ENCODE measurements at regions of chr2 and their contacts with region 1.

Region 1: DNA sequence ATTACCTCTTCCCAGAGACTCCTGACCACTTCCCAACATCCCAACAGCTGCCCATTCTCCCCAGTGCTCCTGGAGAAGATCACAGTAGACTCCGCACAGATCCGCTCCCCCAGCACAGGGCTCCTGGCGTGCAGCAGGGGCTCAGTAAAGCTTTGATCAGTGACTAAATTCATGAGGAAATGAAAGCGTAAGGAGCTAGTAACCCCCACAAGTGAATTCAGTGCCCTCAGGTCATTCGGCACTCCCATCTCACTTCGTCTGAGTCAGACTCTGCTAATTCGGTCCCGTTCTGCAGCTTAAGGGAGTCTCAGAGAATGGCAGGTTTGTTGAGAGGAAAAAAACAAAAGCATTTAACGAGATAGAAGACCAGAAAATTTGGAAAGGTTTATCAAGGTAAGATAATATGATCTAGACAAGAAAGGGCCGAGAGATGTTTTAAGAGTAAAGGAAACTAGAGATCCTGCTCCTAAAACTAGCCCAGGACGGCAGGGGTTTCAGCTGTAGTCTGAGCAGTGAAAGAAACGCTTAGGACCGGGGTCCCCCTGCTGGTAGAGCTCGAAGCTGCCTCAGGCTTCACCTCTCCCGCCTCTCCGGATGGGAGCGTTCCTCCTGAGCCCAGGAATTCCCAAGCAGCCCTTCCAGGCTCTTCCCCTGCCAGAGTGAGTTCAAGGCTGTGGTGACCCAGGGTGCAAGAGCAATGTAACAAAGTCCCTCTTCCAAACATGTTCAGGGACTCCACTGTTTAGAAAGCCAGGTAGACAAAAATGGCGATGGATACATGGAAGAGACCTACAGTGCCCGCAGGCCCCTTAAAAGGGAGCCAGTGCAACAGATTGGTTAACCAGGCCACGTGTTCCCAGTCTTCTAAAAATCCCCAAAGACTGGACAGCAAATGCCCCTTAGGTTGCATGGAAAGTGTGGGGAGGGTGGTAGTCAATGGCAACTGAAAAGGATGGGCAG is 127.3 kb downstream of the DNER start:
- DNase-seq: peak; percentile 82

Region 2: DNA sequence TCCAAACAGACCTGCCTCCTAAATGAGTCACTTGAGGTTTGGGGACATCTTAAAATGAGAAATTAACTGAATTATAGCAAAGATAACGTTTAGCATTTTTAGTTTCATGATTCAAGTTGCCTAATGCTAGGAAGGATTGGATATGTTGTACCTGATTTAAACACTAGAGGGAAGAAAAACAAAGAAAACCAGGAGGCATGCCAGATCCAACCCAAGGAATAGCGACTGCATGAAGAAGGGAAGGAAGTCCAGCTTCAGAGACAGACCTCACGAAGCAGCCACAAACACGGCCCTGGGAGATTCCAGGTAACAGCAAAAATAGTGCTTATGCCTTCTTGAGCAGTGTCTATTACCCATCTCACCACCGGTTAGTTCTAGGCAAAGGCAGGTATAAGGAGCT is 905.6 kb before region 1 on chr2:
- intact Hi-C with region 1: loop called (anchors 10 kb)
- DNase-seq: no peak

Region 3: GRCh38 chr2:229133155-229133772 is 453.8 kb before region 1 on chr2:
- intact Hi-C with region 1: loop called (anchors 5 kb)
- DNase-seq: no peak

Region 4: DNA sequence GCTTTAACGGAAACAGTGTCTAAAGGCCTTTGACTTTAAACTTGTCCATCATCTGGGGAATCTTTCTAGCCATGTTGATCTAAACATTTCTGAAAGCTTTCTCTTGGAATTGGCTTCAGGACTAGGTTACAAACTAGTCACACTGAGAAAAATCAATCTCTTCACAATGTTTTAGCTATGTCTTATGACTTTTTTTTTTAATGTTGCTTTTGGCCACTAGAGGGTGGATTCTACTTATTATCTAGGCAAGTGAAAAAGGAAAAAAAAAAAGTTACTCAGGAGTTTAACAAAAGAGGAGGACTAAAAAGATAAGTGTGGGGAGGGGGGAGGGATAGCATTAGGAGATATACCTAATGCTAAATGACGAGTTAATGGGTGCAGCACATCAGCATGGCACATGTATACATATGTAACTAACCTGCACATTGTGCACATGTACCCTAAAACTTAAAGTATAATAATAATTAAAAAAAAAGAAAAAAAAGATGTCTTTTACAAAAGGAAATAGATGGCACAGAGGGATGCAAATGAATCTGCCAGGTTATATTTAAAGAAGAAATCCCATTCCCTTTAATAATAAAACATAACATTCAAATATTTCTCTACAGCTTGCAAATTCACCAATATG is 155.6 kb before region 1 on chr2:
- intact Hi-C with region 1: loop called (anchors 2 kb)
- DNase-seq: no peak

Measured in cardiac septum (tissue), 1 donor.